ENCODE measurements at regions of chr22 and their contacts with region 1.

Region 1: DNA sequence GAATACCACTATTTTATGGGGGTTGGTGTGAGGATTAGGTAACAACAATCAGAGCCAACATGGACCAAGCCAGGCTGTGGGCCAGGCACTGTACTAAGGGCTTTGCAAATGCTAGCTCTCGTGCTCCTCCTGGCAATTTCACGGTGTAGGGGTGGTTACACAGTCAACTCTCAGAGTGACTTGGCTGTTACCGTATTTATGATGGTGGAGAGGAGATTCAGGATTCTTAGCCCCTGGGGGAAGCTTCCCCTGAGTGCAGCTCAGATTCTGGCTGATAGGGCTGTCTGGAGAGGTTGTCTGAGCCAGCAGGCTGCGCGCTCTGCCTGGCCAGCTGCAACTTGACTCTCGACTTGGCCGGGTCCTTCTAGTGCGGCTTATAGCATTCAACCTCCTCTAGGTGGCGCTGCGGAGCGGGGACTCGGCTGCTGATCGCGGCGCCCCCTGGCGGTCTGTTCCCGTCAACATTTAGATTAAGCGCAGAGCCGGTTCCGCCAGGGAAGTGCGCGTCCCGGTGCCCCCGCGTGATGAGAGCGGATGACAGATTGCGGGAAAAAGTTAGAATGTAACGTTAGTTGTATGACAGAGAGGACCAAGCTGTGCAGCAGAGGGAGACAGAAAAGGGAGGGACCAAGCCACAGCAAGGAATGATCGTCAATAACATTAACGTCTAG is 4.5 kb upstream of the NCF4 start:
- DNase-seq: peak; percentile 94
- H3K4me3 ChIP-seq: no peak overlapping the region
- H3K27ac ChIP-seq: no peak overlapping the region
- H3K4me1 ChIP-seq: peaks cover 0 to 12% (median 3%) of the 10 kb centered on the region in 4 donors
- H3K27me3 ChIP-seq: no peaks in the 10 kb centered on the region
- CTCF ChIP-seq: peak; percentile 99 to 100 (median 100)
- EP300 ChIP-seq: no peak
- POLR2A ChIP-seq: no peak

Region 2: DNA sequence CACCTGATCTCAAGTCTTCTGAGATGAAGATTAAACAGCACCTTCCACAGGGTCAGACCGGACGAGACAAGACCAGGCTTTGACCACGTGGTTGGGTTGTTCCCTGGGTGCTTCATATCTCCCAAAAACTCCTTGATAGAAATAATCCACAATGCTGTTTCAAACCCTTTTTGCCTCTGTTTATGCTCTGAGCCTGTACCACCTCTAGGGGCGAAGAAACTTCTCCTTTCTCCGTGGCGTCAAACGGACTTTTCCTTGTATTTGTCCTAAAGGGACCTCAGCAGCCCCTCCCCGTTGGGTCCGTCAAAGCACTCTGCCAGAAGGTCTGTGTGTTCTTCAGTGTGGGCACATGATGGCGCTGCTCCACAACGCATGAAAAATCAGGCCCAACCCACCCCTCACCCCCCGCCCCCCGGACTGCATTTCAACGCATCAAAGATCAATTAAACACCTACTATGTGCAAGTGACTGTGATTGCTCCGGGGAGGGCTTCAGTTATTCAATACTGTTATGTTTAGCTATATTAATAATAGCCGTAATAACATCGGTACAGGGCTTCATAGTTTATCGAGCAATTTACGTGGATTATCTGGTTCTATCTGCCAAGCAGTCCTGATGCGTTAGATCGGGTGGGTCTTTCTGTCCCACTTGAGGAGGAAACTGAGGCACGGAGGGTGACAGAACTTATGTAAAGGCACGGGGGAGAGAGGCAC is 310.0 kb before region 1 on chr22:
- intact Hi-C with region 1: loop called (anchors 5 kb)
- DNase-seq: no peak
- H3K4me3 ChIP-seq: no peak overlapping the region
- H3K27ac ChIP-seq: no peak overlapping the region
- H3K4me1 ChIP-seq: no peaks in the 10 kb centered on the region
- H3K27me3 ChIP-seq: peaks cover 0 to 36% (median 0%) of the 10 kb centered on the region in 3 donors
- CTCF ChIP-seq: peak in 1 of 4 experiments; percentile 53
- EP300 ChIP-seq: no peak
- POLR2A ChIP-seq: no peak

Region 3: GRCh38 chr22:36757668-36758211 is 98.5 kb before region 1 on chr22:
- intact Hi-C with region 1: loop called (anchors 1 kb)
- DNase-seq: peak; percentile 88
- H3K4me3 ChIP-seq: no peak overlapping the region
- H3K27ac ChIP-seq: no peak overlapping the region
- H3K4me1 ChIP-seq: peaks cover 0 to 33% (median 28%) of the 10 kb centered on the region in 4 donors
- H3K27me3 ChIP-seq: peaks cover 3 to 30% (median 14%) of the 10 kb centered on the region in 3 donors
- CTCF ChIP-seq: peak; percentile 65 to 84 (median 70)
- EP300 ChIP-seq: no peak
- POLR2A ChIP-seq: no peak

Region 4: DNA sequence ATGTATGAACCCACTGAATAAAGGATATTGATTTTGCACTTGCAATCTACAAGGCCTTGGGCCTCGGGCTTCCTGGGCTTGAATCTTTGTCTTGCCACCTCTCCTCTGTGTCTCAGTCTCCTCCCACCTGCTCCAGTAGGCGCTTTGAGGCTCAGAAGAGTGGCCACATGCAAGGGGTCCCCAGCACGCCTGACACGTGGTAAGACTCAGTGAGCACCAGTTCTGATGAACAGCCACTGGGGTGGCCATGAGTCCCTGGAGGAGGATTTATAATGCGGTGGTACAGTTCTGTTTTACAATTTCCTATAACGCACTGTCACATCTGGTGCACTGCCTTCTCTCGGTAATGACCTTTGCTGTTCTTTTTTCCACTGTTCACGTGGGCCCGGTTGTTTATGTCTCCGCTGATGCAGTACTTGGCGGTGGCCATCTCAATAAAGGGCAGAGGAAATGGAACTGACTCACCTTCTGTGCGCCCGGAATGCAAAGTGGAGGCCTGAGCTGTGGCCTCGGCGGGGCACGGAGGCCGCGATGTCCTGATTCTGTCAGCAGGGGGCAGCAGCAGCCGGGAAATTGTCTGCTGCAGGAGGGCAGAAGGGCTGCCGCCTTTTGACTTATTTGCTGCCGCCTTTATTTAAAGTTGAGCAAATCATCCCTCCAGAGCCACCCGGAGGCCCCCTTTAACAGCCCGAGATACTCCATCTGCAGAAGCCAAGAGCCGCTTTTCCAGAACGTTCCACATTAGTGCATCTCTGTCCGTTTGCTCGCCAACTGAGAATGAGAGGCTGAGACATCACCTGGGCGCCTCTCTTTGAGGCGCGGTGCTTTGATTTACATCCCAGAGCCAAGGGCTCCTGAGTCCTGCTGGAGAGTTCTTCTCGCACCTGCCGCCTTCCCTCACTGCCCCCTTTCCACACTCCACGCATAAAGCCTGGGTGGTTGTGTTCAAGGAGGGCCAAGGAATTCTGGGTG is 74.3 kb before region 1 on chr22:
- intact Hi-C with region 1: loop called (anchors 1 kb)
- DNase-seq: peak; percentile 87
- H3K4me3 ChIP-seq: no peak overlapping the region
- H3K27ac ChIP-seq: peak overlapping the region; percentile 32 to 54 (median 46)
- H3K4me1 ChIP-seq: peaks cover 0 to 11% (median 8%) of the 10 kb centered on the region in 4 donors
- H3K27me3 ChIP-seq: no peaks in the 10 kb centered on the region
- CTCF ChIP-seq: peak; percentile 71 to 95 (median 87)
- EP300 ChIP-seq: no peak
- POLR2A ChIP-seq: no peak

Region 5: GRCh38 chr22:37051391-37052385 is 195.4 kb after region 1 on chr22 and contains the start of gene KCTD17:
- intact Hi-C with region 1: loop called (anchors 10 kb)
- DNase-seq: peak; percentile 80
- H3K4me3 ChIP-seq: peak within 1 kb of the TSS; percentile 57 to 87 (median 82)
- H3K27ac ChIP-seq: peak within 1 kb of the TSS in 2 of 4 donors; percentile 47 to 53
- H3K4me1 ChIP-seq: peaks cover 0 to 26% (median 18%) of the 10 kb centered on the region in 4 donors
- H3K27me3 ChIP-seq: no peaks in the 10 kb centered on the region
- CTCF ChIP-seq: no peak
- EP300 ChIP-seq: no peak
- POLR2A ChIP-seq: no peak
- total RNA-seq, gene KCTD17: 17.8 to 49.0 (median 24.0) TPM